ENCODE measurements at regions of chr18 and their contacts with region 1.

Region 1: DNA sequence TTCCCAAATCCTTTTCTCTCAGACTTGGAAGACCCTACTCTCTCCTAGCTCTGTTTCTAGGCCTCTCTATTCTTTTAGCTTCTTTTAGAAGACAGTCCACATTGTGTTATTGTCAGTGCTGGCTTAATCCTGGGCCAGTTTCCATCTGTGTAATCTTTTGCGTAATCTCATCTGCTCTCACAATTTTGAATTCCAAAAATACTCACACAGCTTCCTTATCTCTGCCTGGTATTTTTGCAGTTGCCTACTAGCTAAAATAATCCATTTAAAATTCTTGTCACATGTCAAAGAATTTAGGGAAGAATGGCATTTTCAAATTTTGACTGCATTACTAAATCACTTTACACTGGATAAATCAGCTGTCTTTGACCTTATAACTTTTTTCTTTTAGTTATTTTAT is 200.6 kb upstream of the MEX3C start:
- DNase-seq: no peak
- ATAC-seq: no peak
- H3K4me3 ChIP-seq: no peak overlapping the region
- H3K27ac ChIP-seq: no peak overlapping the region
- H3K4me1 ChIP-seq: peaks cover 0 to 15% (median 2%) of the 10 kb centered on the region in 12 donors
- H3K27me3 ChIP-seq: peaks cover 0 to 3% (median 0%) of the 10 kb centered on the region in 9 donors
- CTCF ChIP-seq: no peak
- POLR2A ChIP-seq: no peak

Region 2: DNA sequence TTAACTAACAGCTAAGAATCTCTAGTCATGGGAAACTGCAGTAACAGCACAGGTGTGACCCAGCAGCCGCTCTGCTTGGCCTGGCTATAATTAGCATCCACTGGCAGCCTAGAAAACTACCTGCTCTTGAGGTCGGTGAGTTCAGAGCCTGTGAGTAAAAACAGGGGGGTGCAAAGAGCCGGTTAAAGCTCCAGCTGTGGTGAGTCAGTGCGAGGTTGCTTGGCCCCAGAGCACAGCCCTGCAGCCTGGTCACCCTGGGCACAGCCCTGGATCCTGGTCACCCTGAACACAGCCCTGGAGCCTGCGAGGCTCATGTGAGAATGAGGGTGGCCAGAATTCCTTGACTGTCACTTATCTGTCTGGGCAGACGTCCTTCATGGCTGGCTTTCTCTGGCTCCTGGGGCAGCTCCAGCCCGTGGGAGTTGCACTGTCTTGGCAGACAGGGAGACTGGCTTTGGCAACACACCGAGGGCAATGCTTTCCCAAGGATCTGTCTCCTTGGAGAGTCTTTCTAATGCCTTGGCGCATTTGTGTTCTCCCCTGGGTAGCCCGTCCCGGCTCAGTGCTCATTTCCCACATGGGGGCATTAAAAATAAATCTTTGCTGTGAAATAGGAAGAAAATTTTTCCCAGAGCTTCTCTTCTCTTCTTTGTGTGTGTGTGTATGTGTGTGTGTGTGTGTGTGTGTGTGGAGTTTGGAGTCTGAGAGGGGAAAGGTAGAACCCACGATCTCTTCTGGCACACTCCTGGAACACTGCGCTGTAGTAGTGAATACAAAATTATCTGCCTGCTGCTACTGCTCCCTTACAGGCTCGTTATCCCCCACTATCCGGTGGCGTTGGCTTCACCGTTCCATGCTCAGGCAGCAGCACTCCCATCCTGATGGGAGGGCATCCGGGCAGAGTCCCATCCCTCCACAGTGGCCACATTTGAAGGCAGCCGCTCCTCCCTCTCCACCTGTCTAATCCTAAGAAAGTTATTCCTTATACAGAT is 49.5 kb after region 1 on chr18:
- intact Hi-C with region 1: loop called in 1 of 10 experiments (anchors 5 kb)
- DNase-seq: peak in 4 of 5 donors; percentile 10 to 62 (median 50)
- ATAC-seq: peak; percentile 72 to 93 (median 80)
- H3K4me3 ChIP-seq: no peak overlapping the region
- H3K27ac ChIP-seq: peak overlapping the region in 5 of 12 donors; percentile 2 to 52 (median 24)
- H3K4me1 ChIP-seq: peaks cover 0 to 10% (median 0%) of the 10 kb centered on the region in 12 donors
- H3K27me3 ChIP-seq: no peaks in the 10 kb centered on the region
- CTCF ChIP-seq: no peak
- POLR2A ChIP-seq: no peak